Caco-2 (cell line): ENCODE measurements at regions of chr1 and their contacts with region 1.

Region 1: DNA sequence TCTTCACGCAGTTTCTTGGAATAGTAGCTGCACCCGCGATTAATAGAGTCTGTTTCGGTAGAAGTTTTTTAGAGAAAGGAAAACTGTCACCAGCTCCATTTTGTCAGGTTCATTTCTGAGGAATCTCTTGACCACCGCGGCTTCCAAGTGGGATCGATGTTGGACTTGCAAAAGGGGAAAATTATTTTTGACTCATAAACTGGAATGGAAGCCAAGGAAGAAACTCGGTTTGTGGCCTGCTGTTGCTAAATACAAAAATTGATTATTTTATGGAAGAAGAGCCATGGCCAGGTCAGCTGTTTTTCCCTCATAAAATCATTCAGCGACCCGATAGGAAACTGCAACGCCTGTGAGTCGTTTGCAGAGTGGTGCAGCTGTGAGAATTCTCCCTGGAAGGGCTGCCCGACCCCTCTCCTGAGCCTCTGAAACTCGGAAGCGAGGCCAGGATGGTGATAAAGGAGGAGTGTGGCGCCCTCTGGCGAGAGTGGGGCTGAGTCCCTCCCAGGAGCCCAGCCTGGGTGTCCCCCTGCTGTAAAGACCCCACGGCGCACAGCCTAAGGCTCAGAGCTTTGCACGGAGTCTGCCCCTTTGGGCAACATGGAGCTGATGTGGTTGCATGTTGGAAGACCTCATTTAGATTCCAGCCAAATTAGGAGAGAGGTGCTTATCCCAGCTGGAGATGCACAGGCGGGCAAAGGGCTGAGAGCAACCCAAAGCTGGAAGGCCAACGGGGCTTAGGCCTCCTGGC is 83.6 kb upstream of the SLC25A33 start:
- DNase-seq: peak; percentile 74 to 75
- H3K4me3 ChIP-seq: no peak overlapping the region
- H3K4me3 Mint-ChIP-seq: no peak overlapping the region
- H3K27ac Mint-ChIP-seq: no peak overlapping the region
- H3K4me1 ChIP-seq: peaks cover 24% of the 10 kb centered on the region
- H3K4me1 Mint-ChIP-seq: peaks cover 24% of the 10 kb centered on the region
- H3K27me3 ChIP-seq: no peaks in the 10 kb centered on the region
- H3K27me3 Mint-ChIP-seq: no peaks in the 10 kb centered on the region
- CTCF ChIP-seq: peak; percentile 76 to 82

Region 2: GRCh38 chr1:9267352-9267686 is 188.3 kb before region 1 on chr1:
- CTCF ChIA-PET with region 1: interaction called, 11 read pairs
- POLR2A ChIA-PET with region 1: no interaction called
- intact Hi-C with region 1: loop called (anchors 1 kb)
- DNase-seq: no peak
- H3K4me3 ChIP-seq: no peak overlapping the region
- H3K4me3 Mint-ChIP-seq: no peak overlapping the region
- H3K27ac Mint-ChIP-seq: peak overlapping the region; percentile 31
- H3K4me1 ChIP-seq: no peaks in the 10 kb centered on the region
- H3K4me1 Mint-ChIP-seq: no peaks in the 10 kb centered on the region
- H3K27me3 ChIP-seq: no peaks in the 10 kb centered on the region
- H3K27me3 Mint-ChIP-seq: no peaks in the 10 kb centered on the region
- CTCF ChIP-seq: no peak

Region 3: DNA sequence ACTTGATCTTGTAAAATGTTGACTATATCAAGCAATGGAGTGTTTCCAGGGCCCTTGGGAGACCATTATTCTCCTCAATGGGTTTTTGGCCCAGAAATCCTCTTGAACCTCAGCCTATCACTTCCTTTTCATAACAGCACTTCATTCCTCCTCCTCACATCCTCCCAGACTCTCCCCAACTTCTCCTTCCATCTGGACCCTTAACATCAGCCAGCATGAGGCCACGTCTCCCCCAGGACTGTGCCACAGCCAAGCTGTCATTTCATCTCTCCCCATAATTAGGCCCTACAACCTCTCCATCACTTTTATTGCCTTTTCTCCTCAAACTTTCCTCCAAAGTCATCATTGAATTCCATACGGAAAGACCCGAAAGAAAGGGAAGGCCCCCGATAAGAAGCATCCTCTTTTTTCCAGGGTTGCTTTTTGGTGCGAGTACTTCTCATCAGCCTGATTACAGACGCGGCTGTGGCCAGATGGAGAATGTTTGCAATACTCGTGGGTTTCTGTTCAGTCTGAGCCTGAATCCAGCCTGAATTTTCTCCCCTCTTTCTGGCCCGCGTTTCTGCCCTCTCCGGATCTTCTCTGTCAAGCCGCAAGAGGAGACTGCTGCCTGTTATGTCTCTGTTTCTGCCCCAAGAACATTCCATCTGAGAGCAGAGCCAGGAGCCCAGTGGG is 30.9 kb after region 1 on chr1:
- CTCF ChIA-PET with region 1: no interaction called
- POLR2A ChIA-PET with region 1: no interaction called
- intact Hi-C with region 1: no loop called
- DNase-seq: no peak
- H3K4me3 ChIP-seq: no peak overlapping the region
- H3K4me3 Mint-ChIP-seq: no peak overlapping the region
- H3K27ac Mint-ChIP-seq: no peak overlapping the region
- H3K4me1 ChIP-seq: no peaks in the 10 kb centered on the region
- H3K4me1 Mint-ChIP-seq: peaks cover 2% of the 10 kb centered on the region
- H3K27me3 ChIP-seq: no peaks in the 10 kb centered on the region
- H3K27me3 Mint-ChIP-seq: no peaks in the 10 kb centered on the region
- CTCF ChIP-seq: no peak